ENCODE measurements at regions of chr3 and their contacts with region 1.

Region 1: GRCh38 chr3:48663415-48664312 is 978 bp upstream of the CELSR3 start:
- DNase-seq: peak; percentile 98

Region 2: GRCh38 chr3:48240711-48241491 is 422.8 kb before region 1 on chr3 and contains the start of gene ZNF589:
- CTCF ChIA-PET with region 1: no interaction called
- POLR2A ChIA-PET with region 1: no interaction called
- DNase-seq: peak; percentile 92

Region 3: GRCh38 chr3:48635222-48636021 is 28.2 kb before region 1 on chr3 and contains the start of gene SLC26A6:
- CTCF ChIA-PET with region 1: interaction called, 5 read pairs
- POLR2A ChIA-PET with region 1: interaction called, 21 read pairs
- DNase-seq: peak; percentile 99

Region 4: DNA sequence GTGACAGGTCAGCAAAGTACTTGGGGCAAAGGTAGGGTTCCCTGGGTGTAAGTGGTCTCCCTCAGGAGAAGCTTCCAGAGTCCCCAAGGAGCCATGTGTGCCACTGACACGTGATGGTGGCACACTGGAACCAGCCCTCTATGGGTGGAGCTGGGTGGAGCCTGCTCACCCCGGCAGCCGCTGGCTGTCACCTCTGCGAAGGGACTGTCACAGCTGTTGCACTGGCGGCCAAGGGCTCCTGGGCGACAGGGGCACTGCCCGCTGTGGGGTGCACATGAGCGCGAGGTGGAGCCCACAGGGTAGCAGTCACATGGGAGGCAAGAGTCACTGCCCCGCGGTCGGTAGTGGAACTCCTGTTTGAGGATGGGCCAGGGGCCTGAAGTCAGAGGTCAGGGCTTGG is 12.9 kb before region 1 on chr3:
- CTCF ChIA-PET with region 1: no interaction called
- POLR2A ChIA-PET with region 1: interaction called, 16 read pairs
- DNase-seq: no peak

Region 5: GRCh38 chr3:48674505-48674904 is 10.8 kb after region 1 on chr3:
- CTCF ChIA-PET with region 1: interaction called, 5 read pairs
- POLR2A ChIA-PET with region 1: interaction called, 35 read pairs
- DNase-seq: no peak

Region 6: GRCh38 chr3:48685602-48686511 is 22.2 kb after region 1 on chr3 and contains the start of gene NCKIPSD:
- CTCF ChIA-PET with region 1: interaction called, 8 read pairs
- POLR2A ChIA-PET with region 1: interaction called, 18 read pairs
- DNase-seq: peak; percentile 97

Region 7: GRCh38 chr3:48716982-48717746 is 53.5 kb after region 1 on chr3 and contains the start of gene IP6K2:
- CTCF ChIA-PET with region 1: no interaction called
- POLR2A ChIA-PET with region 1: interaction called, 19 read pairs
- DNase-seq: peak; percentile 99